BJ (cell line): ENCODE measurements at regions of chr1 and their contacts with region 1.

Region 1: DNA sequence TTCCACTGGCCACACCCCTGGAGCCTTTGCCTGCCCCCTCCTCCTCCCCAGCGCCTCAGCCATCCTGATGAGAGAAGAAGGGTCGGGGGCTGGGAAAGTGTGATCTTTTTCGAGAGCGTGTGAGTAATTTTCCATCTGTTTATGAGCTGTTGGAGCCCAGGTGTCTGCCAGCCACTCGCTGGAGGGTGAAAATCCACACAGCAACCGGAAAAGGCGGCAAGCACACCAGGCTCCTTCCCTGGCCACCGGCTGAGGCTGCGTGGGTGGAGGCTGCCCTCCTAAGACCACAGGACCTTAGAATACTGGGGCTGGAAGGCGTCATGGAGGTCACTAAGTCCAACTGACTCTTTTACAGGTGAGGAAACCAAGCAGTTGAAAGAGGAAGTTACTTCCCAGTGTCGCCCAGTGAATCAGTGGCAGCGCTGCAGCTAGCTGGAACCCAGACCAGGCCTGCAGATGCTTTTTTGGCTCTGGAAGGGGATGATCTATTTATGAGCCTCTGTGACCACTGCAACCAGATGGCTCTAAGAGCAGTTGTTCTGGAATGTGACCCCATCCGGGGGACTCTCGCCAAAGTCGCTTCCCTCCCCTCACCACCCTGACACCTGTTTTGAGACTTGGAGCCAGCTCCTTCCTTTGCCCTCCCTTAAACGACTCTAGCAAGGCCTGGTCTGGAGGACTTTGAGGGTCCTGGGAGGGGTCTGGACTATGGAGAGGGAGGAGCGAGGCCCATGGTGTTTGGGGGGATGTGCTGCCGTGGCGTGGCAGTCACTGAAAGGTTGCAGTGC is 54.5 kb downstream of the LGR6 start:
- DNase-seq: no peak
- H3K4me3 ChIP-seq: no peak overlapping the region
- H3K27me3 ChIP-seq: peaks cover 44% of the 10 kb centered on the region
- CTCF ChIP-seq: no peak

Region 2: GRCh38 chr1:202235856-202236837 is 11.9 kb before region 1 on chr1:
- CTCF ChIA-PET with region 1: interaction called, 17 read pairs
- POLR2A ChIA-PET with region 1: no interaction called
- DNase-seq: peak; percentile 73
- H3K4me3 ChIP-seq: no peak overlapping the region
- H3K27me3 ChIP-seq: peaks cover 7% of the 10 kb centered on the region
- CTCF ChIP-seq: peak; percentile 87